ENCODE measurements at regions of chr12 and their contacts with region 1.

Region 1: GRCh38 chr12:114166362-114166761 is 200.2 kb upstream of the RBM19 start:
- DNase-seq: peak; percentile 38 to 71
- H3K4me3 ChIP-seq: no peak overlapping the region
- H3K27ac ChIP-seq: no peak overlapping the region
- H3K4me1 ChIP-seq: 0 out of 7 replicates have a peak, but pooled peaks cover 0 to 2% (median 0%) of the 10 kb centered on the region in 4 experiments
- H3K27me3 ChIP-seq: peaks cover 0 to 12% (median 3%) of the 10 kb centered on the region in 4 experiments; a peak in 4 of 7 replicates
- CTCF ChIP-seq: peak; percentile 62 to 86 (median 78)
- EP300 ChIP-seq: no peak
- POLR2A ChIP-seq: no peak
- RAD21 ChIP-seq: peak; percentile 94 to 97

Region 2: GRCh38 chr12:113980537-113981337 is 185.6 kb before region 1 on chr12:
- CTCF ChIA-PET with region 1: interaction called, 30 read pairs
- POLR2A ChIA-PET with region 1: no interaction called
- DNase-seq: peak; percentile 36 to 66
- H3K4me3 ChIP-seq: no peak overlapping the region
- H3K27ac ChIP-seq: no peak overlapping the region
- H3K4me1 ChIP-seq: no peaks in the 10 kb centered on the region
- H3K27me3 ChIP-seq: peaks cover 0 to 5% (median under 1%) of the 10 kb centered on the region in 4 experiments; a peak in 1 of 7 replicates
- CTCF ChIP-seq: peak; percentile 48 to 90 (median 88)
- EP300 ChIP-seq: no peak
- POLR2A ChIP-seq: no peak
- RAD21 ChIP-seq: peak; percentile 99

Region 3: DNA sequence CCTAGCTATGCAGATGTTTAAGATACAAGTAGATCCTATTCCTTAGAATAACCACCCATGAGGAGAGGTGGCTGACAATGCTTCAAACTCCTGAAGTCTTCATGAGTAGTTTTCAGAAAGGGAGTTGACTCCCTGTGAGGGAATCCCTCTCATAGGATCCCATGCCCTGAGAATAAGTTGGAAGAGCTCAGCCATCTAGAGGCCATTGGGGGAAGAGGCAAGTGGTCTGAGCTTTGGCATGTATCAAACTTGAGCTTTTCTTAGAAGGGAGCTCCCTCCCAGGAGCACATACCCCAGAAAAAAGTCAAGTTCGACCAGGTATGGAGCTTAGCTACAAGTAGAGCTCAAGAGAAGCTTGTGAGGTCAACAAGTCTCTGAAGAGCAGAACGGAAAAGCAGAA is 34.5 kb before region 1 on chr12:
- CTCF ChIA-PET with region 1: interaction called, 13 read pairs
- POLR2A ChIA-PET with region 1: no interaction called
- DNase-seq: no peak
- H3K4me3 ChIP-seq: no peak overlapping the region
- H3K27ac ChIP-seq: no peak overlapping the region
- H3K4me1 ChIP-seq: no peaks in the 10 kb centered on the region; a peak in 2 of 7 replicates
- H3K27me3 ChIP-seq: peaks cover 0 to 13% (median 1%) of the 10 kb centered on the region in 4 experiments; a peak in 3 of 7 replicates
- CTCF ChIP-seq: peak; percentile 7 to 61 (median 59)
- EP300 ChIP-seq: no peak
- POLR2A ChIP-seq: no peak
- RAD21 ChIP-seq: peak; percentile 53 to 74

Region 4: DNA sequence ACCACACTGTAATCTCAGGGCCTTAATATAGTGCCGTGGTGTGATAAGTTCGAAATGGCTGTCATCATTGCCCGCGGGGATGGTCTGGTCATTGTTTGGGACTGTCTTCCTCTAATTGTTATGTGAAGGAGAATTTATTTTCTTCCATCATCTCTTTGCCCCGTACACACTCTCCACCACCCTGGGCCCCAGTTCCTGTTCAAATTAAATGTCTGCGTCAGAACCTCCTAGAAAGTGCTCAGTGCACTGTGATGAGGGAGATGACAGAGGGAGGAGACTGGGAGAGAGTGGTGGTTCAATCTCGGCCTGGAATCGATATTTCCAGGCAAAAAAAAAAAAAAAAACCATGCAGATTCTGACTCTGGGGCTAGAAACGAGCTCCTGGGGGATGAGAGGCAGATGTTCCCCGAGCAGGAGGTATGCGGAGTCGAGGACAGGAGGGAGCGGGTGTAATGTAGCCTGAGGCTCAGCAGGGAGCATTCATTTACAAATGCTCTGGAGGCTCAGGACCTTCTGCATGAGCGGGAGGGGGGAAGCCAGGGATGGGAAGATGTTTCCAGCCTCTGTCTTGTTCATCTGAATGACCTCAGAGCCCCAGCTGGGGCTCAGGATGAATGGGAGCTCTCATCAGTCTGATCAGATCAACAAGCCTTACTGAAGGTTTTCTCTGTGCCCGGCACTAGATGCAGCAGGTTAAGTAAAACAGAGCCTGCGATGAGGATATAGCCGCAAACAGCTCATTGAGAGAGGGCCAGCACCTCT is 20.1 kb after region 1 on chr12:
- CTCF ChIA-PET with region 1: interaction called, 60 read pairs
- POLR2A ChIA-PET with region 1: interaction called, 3 read pairs
- DNase-seq: peak; percentile 53
- H3K4me3 ChIP-seq: peak overlapping the region in 1 of 4 experiments; percentile 23; a peak in 1 of 8 replicates
- H3K27ac ChIP-seq: no peak overlapping the region
- H3K4me1 ChIP-seq: peaks cover 3 to 10% (median 8%) of the 10 kb centered on the region in 4 experiments; a peak in 4 of 7 replicates
- H3K27me3 ChIP-seq: peaks cover 0 to 3% (median under 1%) of the 10 kb centered on the region in 4 experiments; a peak in 2 of 7 replicates
- CTCF ChIP-seq: no peak
- EP300 ChIP-seq: no peak
- POLR2A ChIP-seq: no peak
- RAD21 ChIP-seq: peak in 1 of 2 experiments; percentile 1; a peak in 1 of 4 replicates

Region 5: DNA sequence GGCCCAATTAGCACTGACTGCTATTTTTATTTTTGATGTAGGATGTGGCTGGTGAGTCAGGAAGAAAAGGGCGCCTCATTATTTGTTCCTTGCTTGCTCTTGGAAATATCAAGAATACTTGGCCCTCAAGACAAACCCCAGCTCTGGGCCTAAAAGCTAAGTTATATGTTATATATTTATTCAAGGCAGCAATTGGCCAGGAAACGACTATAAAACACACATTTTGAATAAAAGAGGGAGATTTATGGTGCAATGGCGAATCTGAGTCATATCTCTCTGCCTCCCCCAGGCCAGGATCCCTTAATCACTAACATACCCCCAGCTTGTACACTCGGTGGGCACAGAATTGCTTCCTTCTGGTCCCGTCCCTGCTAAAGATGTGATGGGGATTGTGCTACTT is 176.3 kb after region 1 on chr12:
- CTCF ChIA-PET with region 1: interaction called, 15 read pairs
- POLR2A ChIA-PET with region 1: no interaction called
- DNase-seq: no peak
- H3K4me3 ChIP-seq: no peak overlapping the region
- H3K27ac ChIP-seq: no peak overlapping the region
- H3K4me1 ChIP-seq: peaks cover 0 to 4% (median 0%) of the 10 kb centered on the region in 4 experiments; a peak in 1 of 7 replicates
- H3K27me3 ChIP-seq: no peaks in the 10 kb centered on the region
- CTCF ChIP-seq: no peak
- EP300 ChIP-seq: no peak
- POLR2A ChIP-seq: no peak
- RAD21 ChIP-seq: no peak

Region 6: DNA sequence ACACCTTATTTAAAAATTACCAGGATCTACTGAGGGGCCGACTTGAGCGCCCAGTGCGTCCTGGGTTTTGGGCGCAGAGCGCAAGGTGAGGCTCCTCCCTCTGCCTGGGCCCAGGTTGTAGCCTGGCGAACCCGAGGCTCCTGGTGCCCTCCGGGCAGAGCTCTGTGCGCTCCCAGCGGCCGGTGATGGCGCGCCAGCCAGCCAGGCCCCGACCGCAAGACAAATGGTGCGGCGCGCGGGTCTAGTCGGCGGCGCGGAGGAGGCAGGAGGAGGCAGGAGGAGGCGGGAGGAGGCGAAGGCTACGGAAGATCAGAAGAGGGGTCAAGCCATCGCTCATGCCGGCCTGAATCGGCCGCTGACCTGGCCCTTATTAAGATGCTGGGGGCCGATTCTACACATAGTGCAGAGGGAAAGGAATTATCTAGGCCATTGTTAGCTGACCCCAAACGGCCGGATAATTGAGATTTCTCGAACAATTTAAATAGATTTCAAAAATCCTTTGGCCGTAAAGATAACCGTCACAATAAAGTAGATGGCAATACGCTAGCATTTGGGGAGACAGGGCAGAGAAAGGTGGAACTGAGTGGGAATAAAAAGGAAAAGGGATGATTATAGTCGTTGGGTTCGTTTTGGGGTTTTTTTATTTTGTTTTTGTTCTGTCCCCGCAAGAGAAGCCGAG is 236.8 kb after region 1 on chr12:
- CTCF ChIA-PET with region 1: interaction called, 37 read pairs
- POLR2A ChIA-PET with region 1: no interaction called
- DNase-seq: peak; percentile 54 to 83
- H3K4me3 ChIP-seq: 0 out of 8 replicates have a peak overlapping the region, but pooled peaks of 1 of the 4 experiments have one; percentile 18
- H3K27ac ChIP-seq: no peak overlapping the region
- H3K4me1 ChIP-seq: peaks cover 9 to 51% (median 25%) of the 10 kb centered on the region in 4 experiments
- H3K27me3 ChIP-seq: peaks cover 98 to 100% (median 99%) of the 10 kb centered on the region in 4 experiments
- CTCF ChIP-seq: peak; percentile 57 to 72 (median 70)
- EP300 ChIP-seq: no peak
- POLR2A ChIP-seq: no peak
- RAD21 ChIP-seq: peak; percentile 64 to 78

Region 7: DNA sequence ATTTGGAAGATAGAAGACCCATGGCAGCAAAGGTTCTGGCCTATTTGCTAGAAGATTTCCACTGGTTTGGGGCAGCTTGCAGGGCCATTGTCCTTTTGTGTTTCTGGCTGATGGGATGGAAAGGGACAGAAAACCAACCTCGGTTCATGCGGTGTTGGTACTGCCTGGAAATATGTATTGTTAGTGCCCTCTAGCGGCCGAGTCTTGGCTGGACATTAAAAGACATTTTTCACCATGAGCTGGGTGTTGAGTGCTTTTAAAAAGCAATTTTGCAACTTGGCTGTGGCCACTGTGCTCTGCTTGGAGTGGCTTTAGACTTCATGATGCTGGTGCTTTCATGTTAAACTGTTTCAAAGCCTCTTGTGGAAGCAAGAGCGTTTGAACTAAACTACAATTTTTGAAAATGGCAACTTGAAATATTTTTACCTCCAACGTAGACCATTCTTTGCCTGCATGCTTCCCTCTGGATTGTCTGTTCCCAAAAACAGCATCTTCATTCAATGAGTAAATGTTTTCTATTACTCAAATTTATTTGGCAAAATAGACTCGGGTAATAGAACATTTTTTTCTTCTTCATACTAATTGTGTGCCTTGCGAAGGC is 342.3 kb after region 1 on chr12:
- CTCF ChIA-PET with region 1: interaction called, 34 read pairs
- POLR2A ChIA-PET with region 1: no interaction called
- DNase-seq: peak; percentile 56 to 82
- H3K4me3 ChIP-seq: no peak overlapping the region
- H3K27ac ChIP-seq: no peak overlapping the region
- H3K4me1 ChIP-seq: no peaks in the 10 kb centered on the region
- H3K27me3 ChIP-seq: peaks cover 0 to 6% (median 0%) of the 10 kb centered on the region in 4 experiments; a peak in 2 of 7 replicates
- CTCF ChIP-seq: peak; percentile 40 to 86 (median 78)
- EP300 ChIP-seq: peak in 1 of 2 experiments; percentile 8; a peak in 1 of 3 replicates
- POLR2A ChIP-seq: no peak
- RAD21 ChIP-seq: peak; percentile 94 to 95

Measured in H1 (cell line).